ENCODE measurements at regions of chr16 and their contacts with region 1.

Region 1: GRCh38 chr16:84738255-84739038 is 38.6 kb downstream of the USP10 start:
- DNase-seq: peak; percentile 85
- H3K4me3 Mint-ChIP-seq: no peak overlapping the region
- H3K27ac Mint-ChIP-seq: no peak overlapping the region
- H3K4me1 Mint-ChIP-seq: peaks cover 53% of the 10 kb centered on the region
- H3K27me3 Mint-ChIP-seq: no peaks in the 10 kb centered on the region

Region 2: GRCh38 chr16:84277237-84277823 is 461.1 kb before region 1 on chr16:
- CTCF ChIA-PET with region 1: no interaction called
- intact Hi-C with region 1: loop called (anchors 10 kb)
- DNase-seq: peak; percentile 86
- H3K4me3 Mint-ChIP-seq: no peak overlapping the region
- H3K27ac Mint-ChIP-seq: no peak overlapping the region
- H3K4me1 Mint-ChIP-seq: no peaks in the 10 kb centered on the region
- H3K27me3 Mint-ChIP-seq: no peaks in the 10 kb centered on the region

Region 3: GRCh38 chr16:84672276-84673202 is 65.9 kb before region 1 on chr16:
- CTCF ChIA-PET with region 1: interaction called, 39 read pairs
- intact Hi-C with region 1: loop called (anchors 1 kb)
- DNase-seq: peak; percentile 90
- H3K4me3 Mint-ChIP-seq: no peak overlapping the region
- H3K27ac Mint-ChIP-seq: no peak overlapping the region
- H3K4me1 Mint-ChIP-seq: peaks cover 7% of the 10 kb centered on the region
- H3K27me3 Mint-ChIP-seq: no peaks in the 10 kb centered on the region

Region 4: GRCh38 chr16:84714028-84714427 is 24.4 kb before region 1 on chr16:
- CTCF ChIA-PET with region 1: interaction called, 13 read pairs
- intact Hi-C with region 1: no loop called
- DNase-seq: no peak
- H3K4me3 Mint-ChIP-seq: no peak overlapping the region
- H3K27ac Mint-ChIP-seq: no peak overlapping the region
- H3K4me1 Mint-ChIP-seq: peaks cover 77% of the 10 kb centered on the region
- H3K27me3 Mint-ChIP-seq: no peaks in the 10 kb centered on the region

Region 5: DNA sequence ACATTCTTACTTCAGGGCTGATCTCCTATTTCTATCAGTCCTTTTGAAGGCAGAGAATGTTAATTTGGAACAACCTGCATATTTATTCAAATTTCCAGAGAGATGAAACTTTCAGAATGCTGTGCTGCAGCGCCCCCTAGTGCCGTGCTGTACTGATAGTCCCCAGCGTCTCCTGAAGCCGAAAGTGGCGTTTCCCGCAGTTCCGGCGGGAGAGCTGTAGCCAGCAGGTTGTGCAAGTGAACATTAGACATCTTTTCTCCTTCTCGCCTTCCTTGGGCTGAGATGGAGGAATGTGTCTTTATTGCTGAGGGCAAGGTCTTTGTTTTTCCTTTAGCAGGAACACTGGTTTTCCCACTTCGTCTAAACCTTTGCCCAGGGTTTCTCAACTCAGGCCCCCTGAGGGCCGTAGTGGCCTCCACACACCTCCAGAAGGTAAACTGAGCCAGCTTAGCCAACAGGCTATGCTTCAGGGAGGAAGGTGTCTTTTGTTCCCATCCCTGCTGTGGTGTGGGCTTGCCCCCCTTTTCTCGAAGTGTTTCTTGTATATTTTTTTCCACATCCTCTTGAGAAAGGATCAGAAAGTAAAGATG is 12.3 kb before region 1 on chr16:
- CTCF ChIA-PET with region 1: interaction called, 124 read pairs
- intact Hi-C with region 1: no loop called
- DNase-seq: peak; percentile 91
- H3K4me3 Mint-ChIP-seq: no peak overlapping the region
- H3K27ac Mint-ChIP-seq: no peak overlapping the region
- H3K4me1 Mint-ChIP-seq: peaks cover 74% of the 10 kb centered on the region
- H3K27me3 Mint-ChIP-seq: no peaks in the 10 kb centered on the region

Region 6: DNA sequence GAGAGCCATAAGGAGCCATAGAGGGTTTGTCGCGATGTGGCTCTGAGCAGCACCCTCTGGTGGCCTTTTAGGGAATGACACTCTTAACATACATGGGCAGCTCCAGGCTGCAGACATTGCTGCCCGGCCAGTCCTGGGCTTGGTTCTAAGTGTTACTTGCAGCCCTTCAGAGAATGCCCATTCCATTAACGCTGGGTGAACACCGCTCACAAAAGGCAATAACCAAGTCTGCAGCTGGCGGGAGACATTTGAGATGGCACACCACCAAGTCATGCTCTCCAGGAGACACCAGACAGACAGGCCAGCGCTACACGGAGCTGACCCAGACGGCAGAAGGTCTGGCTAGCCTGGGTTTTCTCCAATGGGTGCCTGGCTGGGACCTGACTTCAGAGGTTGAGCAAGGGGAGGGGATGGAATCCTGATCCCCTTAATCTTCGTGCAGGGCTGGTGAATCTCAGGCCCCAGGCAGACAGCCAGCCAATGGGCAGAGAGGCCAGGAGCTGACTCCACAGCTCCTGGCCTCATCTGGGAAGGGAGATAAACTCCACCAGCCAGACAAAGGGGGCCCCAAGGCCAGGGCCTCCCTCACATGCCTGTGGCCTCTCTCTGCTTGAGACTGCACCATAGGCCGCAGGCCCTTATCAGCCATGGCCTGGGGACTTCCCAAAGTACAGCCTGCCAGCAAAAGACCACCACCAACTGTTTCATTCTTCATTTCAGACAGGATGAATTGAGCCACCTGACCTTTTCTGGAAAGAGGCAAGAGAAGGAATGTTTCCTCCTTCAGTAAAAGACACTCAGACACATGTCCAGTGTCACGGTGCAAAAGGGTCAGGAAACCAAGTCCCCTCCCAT is 214.1 kb after region 1 on chr16:
- CTCF ChIA-PET with region 1: interaction called, 15 read pairs
- intact Hi-C with region 1: no loop called
- DNase-seq: peak; percentile 83
- H3K4me3 Mint-ChIP-seq: no peak overlapping the region
- H3K27ac Mint-ChIP-seq: no peak overlapping the region
- H3K4me1 Mint-ChIP-seq: no peaks in the 10 kb centered on the region
- H3K27me3 Mint-ChIP-seq: no peaks in the 10 kb centered on the region

Measured in activated naive CD4-positive, alpha-beta T cell treated with anti-CD3 and anti-CD28 coated beads for 36 hours (primary cell).